Naive thymus-derived CD4-positive, alpha-beta T cell (primary cell): ENCODE measurements at regions of chr3 and their contacts with region 1.

Region 1: GRCh38 chr3:48685602-48686511 is at the start of gene NCKIPSD:
- DNase-seq: peak; percentile 83 to 96 (median 92)
- ATAC-seq: peak; percentile 97
- H3K4me3 ChIP-seq: peak within 1 kb of the TSS; percentile 92
- H3K4me3 Mint-ChIP-seq: peak within 1 kb of the TSS; percentile 88 to 95 (median 93)
- H3K27ac ChIP-seq: peak within 1 kb of the TSS; percentile 79
- H3K27ac Mint-ChIP-seq: peak within 1 kb of the TSS; percentile 73 to 94 (median 89)
- H3K4me1 ChIP-seq: peaks cover 8 to 18% of the 10 kb centered on the region in 2 donors
- H3K4me1 Mint-ChIP-seq: peaks cover 29 to 38% (median 33%) of the 10 kb centered on the region in 7 donors
- H3K27me3 ChIP-seq: no peaks in the 10 kb centered on the region
- H3K27me3 Mint-ChIP-seq: no peaks in the 10 kb centered on the region
- total RNA-seq, gene NCKIPSD: 13.7 to 42.1 (median 20.3) TPM

Region 2: DNA sequence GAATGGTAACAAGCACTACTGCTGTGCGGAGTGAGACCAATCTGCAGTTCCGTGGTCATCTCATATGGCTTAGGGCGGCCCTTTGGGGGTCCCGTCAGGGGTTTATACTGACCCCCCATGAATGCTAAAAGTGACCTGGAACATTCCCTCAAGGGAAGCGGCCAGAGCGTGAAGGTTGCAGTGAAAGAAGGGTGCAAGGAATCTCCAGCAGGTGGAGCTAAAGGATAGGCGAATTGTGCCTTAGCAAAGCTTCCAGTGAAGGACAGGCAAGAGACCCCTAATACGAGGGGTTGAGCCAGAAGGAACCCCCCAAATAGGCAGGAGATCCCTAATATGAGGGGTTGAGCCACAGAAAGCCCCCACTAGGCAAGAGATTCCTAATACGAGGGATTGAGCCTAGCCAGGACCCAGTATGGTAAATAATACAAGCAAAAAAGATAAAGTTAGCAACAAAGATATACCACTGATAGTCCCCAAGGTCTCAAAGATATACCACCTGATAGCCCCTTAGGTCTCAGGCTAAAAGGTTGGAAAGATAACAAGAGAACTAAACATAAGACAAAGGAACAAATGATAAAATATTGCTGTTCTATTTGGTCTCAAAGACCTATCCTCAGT is 412.2 kb before region 1 on chr3:
- CTCF ChIA-PET with region 1: no interaction called
- POLR2A ChIA-PET with region 1: no interaction called
- intact Hi-C with region 1: loop called in 1 of 2 experiments (anchors 2 kb)
- DNase-seq: peak in 8 of 9 donors; percentile 37 to 66 (median 55)
- ATAC-seq: peak; percentile 60
- H3K4me3 ChIP-seq: no peak overlapping the region
- H3K4me3 Mint-ChIP-seq: no peak overlapping the region
- H3K27ac ChIP-seq: no peak overlapping the region
- H3K27ac Mint-ChIP-seq: peak overlapping the region in 4 of 9 donors; percentile 8 to 74 (median 51)
- H3K4me1 ChIP-seq: peaks cover 4 to 14% of the 10 kb centered on the region in 2 donors
- H3K4me1 Mint-ChIP-seq: peaks cover 6 to 29% (median 21%) of the 10 kb centered on the region in 7 donors
- H3K27me3 ChIP-seq: no peaks in the 10 kb centered on the region
- H3K27me3 Mint-ChIP-seq: no peaks in the 10 kb centered on the region

Region 3: DNA sequence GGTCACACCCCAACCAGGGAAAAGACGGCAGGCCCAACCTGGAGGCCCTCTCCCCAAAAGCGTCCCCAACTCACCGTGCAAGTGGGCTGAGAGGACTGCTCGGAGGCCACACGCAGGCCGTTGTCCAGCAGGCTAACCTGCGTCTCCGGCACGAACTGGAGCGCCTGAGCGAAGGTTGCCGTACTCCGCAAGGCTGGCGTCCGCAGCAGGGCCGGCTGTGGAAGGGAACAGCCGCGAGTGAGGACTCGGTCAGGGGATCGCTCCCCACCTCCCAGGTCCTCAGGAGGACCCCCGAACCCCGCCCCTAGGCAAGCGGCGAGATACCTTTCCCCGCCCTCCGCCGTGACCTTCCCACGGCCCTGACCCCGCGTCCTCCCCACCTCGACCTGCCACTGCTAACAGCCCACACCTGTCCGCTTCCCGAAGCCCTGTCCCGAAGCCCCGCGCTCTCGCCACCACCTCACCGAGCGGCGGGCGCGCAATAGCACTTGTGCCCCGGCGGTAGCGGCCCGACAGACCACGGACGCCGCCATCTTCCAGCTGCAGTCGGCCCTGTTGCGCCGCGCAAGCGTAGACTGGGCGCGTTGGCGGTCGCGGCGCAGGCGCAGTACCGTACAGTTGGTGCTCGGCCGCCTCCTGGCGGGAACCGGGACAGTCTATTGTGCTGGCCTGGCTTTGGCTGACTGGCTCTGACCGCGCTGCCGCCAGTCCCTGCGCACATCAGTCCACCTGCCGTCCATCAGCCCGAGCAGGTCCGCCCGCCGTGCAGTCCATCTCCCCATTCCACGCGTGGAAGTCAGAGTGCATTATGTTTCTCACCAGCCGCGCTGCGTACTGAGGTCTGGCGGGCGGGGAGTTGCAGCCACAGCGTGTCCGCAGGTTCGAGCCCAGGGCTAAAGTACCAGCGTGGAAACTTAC is 76.5 kb before region 1 on chr3 and contains the start of gene UQCRC1:
- CTCF ChIA-PET with region 1: interaction called, 3 read pairs
- POLR2A ChIA-PET with region 1: no interaction called
- intact Hi-C with region 1: loop called (anchors 1 to 2 kb)
- DNase-seq: peak; percentile 85 to 94 (median 93)
- ATAC-seq: peak; percentile 99
- H3K4me3 ChIP-seq: peak within 1 kb of the TSS; percentile 96
- H3K4me3 Mint-ChIP-seq: peak within 1 kb of the TSS; percentile 86 to 100 (median 98)
- H3K27ac ChIP-seq: peak within 1 kb of the TSS; percentile 84
- H3K27ac Mint-ChIP-seq: peak within 1 kb of the TSS; percentile 91 to 99 (median 97)
- H3K4me1 ChIP-seq: peaks cover 10 to 12% of the 10 kb centered on the region in 2 donors
- H3K4me1 Mint-ChIP-seq: peaks cover 12 to 31% (median 19%) of the 10 kb centered on the region in 7 donors
- H3K27me3 ChIP-seq: no peaks in the 10 kb centered on the region
- H3K27me3 Mint-ChIP-seq: no peaks in the 10 kb centered on the region
- total RNA-seq, gene UQCRC1: 77.3 to 156 (median 91.7) TPM

Region 4: DNA sequence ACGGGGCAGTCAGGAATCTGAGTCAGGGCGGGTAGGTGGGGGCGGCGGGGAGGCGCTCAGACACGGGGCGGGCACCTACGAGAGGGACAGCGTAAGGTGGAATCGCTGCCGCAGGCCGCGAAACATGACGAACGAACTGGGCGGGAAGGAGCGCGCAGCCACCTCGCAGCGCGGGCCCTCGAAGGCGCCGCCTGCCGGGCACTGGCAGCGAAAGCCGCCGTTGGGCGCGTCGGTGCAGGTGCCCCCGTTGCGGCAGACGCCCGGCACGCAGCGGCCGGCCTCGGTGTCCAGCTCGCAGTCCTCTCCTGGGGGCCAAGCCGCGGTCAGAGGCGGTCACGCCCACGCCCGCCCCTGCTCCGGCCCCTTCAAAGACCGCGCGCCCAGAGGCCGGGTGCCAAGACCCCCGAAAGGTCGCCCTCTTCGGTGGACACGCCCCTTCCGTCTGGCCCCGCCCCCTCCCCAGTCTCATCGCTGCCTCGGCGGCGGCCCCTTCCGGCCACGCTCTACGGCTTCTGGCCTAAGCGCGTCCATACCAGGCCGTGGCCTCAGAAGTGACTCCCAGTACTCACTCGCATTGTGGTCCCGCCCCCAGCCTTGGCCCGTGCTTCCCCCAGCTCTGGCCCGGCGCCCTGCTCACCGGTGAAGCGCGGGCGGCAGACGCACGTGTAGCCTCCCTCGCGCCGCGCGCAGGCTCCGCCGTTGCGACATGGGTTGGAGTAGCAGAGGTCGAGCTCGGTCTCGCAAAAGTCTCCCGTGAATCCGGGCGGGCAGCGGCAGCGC is 29.6 kb before region 1 on chr3:
- CTCF ChIA-PET with region 1: no interaction called
- POLR2A ChIA-PET with region 1: no interaction called
- intact Hi-C with region 1: loop called in 1 of 2 experiments (anchors 1 kb)
- DNase-seq: peak; percentile 75 to 87 (median 86)
- ATAC-seq: peak; percentile 90
- H3K4me3 ChIP-seq: peak overlapping the region; percentile 70
- H3K4me3 Mint-ChIP-seq: peak overlapping the region; percentile 67 to 86 (median 80)
- H3K27ac ChIP-seq: peak overlapping the region; percentile 65
- H3K27ac Mint-ChIP-seq: peak overlapping the region; percentile 42 to 88 (median 79)
- H3K4me1 ChIP-seq: peaks cover 12 to 14% of the 10 kb centered on the region in 2 donors
- H3K4me1 Mint-ChIP-seq: peaks cover 6 to 23% (median 9%) of the 10 kb centered on the region in 7 donors
- H3K27me3 ChIP-seq: no peaks in the 10 kb centered on the region
- H3K27me3 Mint-ChIP-seq: peaks cover 0 to 15% (median 5%) of the 10 kb centered on the region in 5 donors

Region 5: GRCh38 chr3:48739955-48740823 is 54.3 kb after region 1 on chr3:
- CTCF ChIA-PET with region 1: interaction called, 3 read pairs
- POLR2A ChIA-PET with region 1: no interaction called
- intact Hi-C with region 1: loop called in 1 of 2 experiments (anchors 1 kb)
- DNase-seq: peak; percentile 8 to 55 (median 35)
- ATAC-seq: peak; percentile 90
- H3K4me3 ChIP-seq: no peak overlapping the region
- H3K4me3 Mint-ChIP-seq: no peak overlapping the region
- H3K27ac ChIP-seq: no peak overlapping the region
- H3K27ac Mint-ChIP-seq: peak overlapping the region in 2 of 9 donors; percentile 1 to 6
- H3K4me1 ChIP-seq: no peaks in the 10 kb centered on the region
- H3K4me1 Mint-ChIP-seq: peaks cover 0 to 9% (median 0%) of the 10 kb centered on the region in 7 donors
- H3K27me3 ChIP-seq: no peaks in the 10 kb centered on the region
- H3K27me3 Mint-ChIP-seq: no peaks in the 10 kb centered on the region

Region 6: DNA sequence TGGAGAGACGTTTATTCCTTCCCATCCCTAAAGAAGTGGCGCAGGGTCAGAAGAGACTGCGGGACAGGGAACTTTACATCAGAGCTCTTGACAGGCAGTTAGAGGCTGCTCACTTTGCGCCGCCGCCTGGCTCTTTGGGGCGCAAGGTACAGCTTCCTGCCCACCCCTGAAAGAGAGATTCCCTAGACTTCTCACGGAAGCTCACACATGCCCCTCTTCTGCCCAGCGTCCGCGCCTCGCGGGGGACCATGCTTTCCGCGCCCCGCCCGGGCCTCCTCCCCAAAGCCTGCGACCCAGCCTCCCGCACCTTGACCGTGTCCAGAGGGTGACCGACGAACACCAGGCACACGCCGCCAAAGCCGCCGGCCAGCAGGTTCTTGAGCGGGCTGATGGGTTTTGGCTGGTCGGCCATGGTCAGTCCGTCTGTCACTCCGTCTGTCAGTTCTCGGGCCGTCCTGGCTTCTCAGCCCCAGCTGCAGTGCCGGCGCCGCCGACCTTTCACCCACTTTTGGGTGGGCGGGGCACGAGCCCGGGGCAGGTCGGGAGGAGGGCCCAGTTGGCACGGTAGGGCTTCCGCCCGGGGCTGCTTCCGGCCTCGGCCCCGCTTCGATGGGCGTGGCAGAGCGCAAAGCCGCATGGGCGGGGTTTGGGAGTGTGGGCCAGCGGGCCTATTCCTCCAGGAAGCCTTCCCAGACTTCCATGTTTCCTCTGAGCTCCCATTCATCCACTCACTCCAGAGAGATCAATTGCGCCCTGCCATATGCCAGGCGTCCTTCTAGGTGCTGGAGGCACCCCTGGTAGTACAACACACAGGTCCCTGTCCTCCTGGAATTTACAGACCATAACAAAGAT is 212.8 kb after region 1 on chr3 and contains the start of gene SLC25A20:
- CTCF ChIA-PET with region 1: no interaction called
- POLR2A ChIA-PET with region 1: no interaction called
- intact Hi-C with region 1: loop called in 1 of 2 experiments (anchors 10 kb)
- DNase-seq: peak; percentile 78 to 95 (median 85)
- ATAC-seq: peak; percentile 98
- H3K4me3 ChIP-seq: peak within 1 kb of the TSS; percentile 91
- H3K4me3 Mint-ChIP-seq: peak within 1 kb of the TSS; percentile 89 to 99 (median 94)
- H3K27ac ChIP-seq: peak within 1 kb of the TSS; percentile 76
- H3K27ac Mint-ChIP-seq: peak within 1 kb of the TSS; percentile 83 to 99 (median 93)
- H3K4me1 ChIP-seq: peaks cover 21 to 23% of the 10 kb centered on the region in 2 donors
- H3K4me1 Mint-ChIP-seq: peaks cover 27 to 51% (median 41%) of the 10 kb centered on the region in 7 donors
- H3K27me3 ChIP-seq: no peaks in the 10 kb centered on the region
- H3K27me3 Mint-ChIP-seq: no peaks in the 10 kb centered on the region
- total RNA-seq, gene SLC25A20: 6.6 to 27.3 (median 12.8) TPM